ENCODE measurements at regions of chr19 and their contacts with region 1.

Region 1: GRCh38 chr19:3821857-3822364 is 35.7 kb upstream of the MATK start:
- DNase-seq: peak; percentile 52
- H3K4me3 ChIP-seq: no peak overlapping the region
- H3K27ac ChIP-seq: no peak overlapping the region
- H3K4me1 ChIP-seq: no peaks in the 10 kb centered on the region
- H3K27me3 ChIP-seq: no peaks in the 10 kb centered on the region
- CTCF ChIP-seq: peak; percentile 99
- POLR2A ChIP-seq: no peak

Region 2: GRCh38 chr19:3762501-3763459 is 59.1 kb before region 1 on chr19 and contains the start of gene MRPL54:
- CTCF ChIA-PET with region 1: interaction called, 19 read pairs
- POLR2A ChIA-PET with region 1: no interaction called
- dilution Hi-C with region 1: no loop called
- intact Hi-C with region 1: no loop called
- DNase-seq: peak; percentile 100
- H3K4me3 ChIP-seq: peak within 1 kb of the TSS; percentile 64 to 93 (median 83)
- H3K27ac ChIP-seq: peak within 1 kb of the TSS; percentile 92
- H3K4me1 ChIP-seq: peaks cover 14% of the 10 kb centered on the region
- H3K27me3 ChIP-seq: no peaks in the 10 kb centered on the region
- CTCF ChIP-seq: no peak
- POLR2A ChIP-seq: peak; percentile 74
- total RNA-seq, gene MRPL54: 67.5 and 76.3 TPM in 2 replicates

Region 3: DNA sequence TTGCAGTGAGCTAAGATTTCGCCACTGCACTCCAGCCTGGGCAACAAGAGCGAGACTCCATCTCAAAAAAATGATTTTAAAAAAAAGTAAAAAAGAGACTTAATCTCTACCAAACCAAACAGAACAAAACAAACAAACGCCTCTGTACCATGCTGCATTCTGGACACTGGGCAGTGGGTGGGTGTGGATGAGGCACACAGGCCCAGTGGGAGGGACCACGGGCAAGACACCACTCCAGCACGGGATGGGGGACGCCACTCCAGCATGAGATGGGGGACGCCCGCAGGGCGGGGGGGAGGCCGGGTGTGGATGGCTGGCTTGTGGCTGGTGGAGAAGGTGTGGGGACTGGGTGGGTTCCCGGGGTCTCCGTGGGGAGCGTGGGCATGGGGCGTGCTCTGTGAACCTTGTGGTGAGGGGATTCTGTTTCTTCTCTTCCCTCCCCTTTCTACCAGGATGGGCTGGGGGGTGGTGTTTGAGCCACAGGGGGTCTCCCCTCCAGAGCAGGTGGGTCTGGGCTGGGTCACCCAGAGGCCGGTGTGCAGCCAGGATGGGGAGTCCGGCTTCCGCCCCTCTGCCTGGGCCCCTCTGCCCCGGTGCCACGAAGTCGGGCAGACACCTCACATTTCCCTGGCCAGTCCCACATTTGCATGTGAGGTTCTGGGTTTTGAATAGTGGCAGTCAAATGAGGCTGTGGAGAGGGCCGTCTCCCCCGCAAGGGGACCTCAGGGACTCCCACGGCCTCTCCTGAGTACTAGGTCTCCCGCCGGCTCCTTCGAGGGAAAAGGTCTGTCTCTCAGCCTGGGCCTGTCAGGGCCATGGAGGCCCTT is 11.8 kb before region 1 on chr19:
- CTCF ChIA-PET with region 1: interaction called, 22 read pairs
- POLR2A ChIA-PET with region 1: no interaction called
- dilution Hi-C with region 1: no loop called
- intact Hi-C with region 1: no loop called
- DNase-seq: no peak
- H3K4me3 ChIP-seq: no peak overlapping the region
- H3K27ac ChIP-seq: no peak overlapping the region
- H3K4me1 ChIP-seq: no peaks in the 10 kb centered on the region
- H3K27me3 ChIP-seq: no peaks in the 10 kb centered on the region
- CTCF ChIP-seq: no peak
- POLR2A ChIP-seq: no peak

Region 4: GRCh38 chr19:3842948-3843347 is 21.0 kb after region 1 on chr19:
- CTCF ChIA-PET with region 1: interaction called, 29 read pairs
- POLR2A ChIA-PET with region 1: no interaction called
- dilution Hi-C with region 1: no loop called
- intact Hi-C with region 1: no loop called
- DNase-seq: no peak
- H3K4me3 ChIP-seq: no peak overlapping the region
- H3K27ac ChIP-seq: no peak overlapping the region
- H3K4me1 ChIP-seq: no peaks in the 10 kb centered on the region
- H3K27me3 ChIP-seq: no peaks in the 10 kb centered on the region
- CTCF ChIP-seq: no peak
- POLR2A ChIP-seq: no peak

Measured in endothelial cell of umbilical vein (primary cell).